ENCODE measurements at regions of chr9 and their contacts with region 1.

Region 1: DNA sequence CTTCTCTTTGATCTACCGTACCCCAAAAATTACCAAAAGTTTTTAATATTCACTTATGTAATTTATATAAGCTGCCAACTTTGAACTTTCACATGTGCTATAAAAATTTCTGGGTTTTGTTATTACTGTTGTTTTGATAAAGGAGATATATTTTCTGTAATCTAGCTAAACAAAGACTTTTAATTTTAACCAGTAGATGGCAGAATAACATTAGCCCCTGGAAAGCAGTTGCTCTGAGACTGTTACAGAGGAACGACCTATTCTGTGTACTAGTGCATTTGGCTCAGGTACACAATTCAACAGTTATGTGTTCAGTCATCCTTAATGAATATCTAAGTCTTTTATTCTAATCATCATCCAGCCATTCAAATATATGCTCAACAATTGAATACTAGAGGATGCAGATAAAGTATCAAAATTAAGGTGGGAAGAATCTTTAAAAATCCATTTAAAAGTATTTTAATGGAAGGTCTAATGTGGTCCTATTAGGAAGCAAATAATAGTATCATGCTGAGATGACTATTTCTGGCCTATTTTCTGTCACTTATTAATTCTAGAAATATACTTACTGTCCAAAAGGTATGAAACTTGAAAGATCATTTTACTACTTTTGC is 8.6 kb downstream of the KLHL9 start:
- DNase-seq: no peak
- ATAC-seq: peak; percentile 80

Region 2: GRCh38 chr9:21294325-21294724 is 32.3 kb before region 1 on chr9:
- intact Hi-C with region 1: no loop called
- DNase-seq: no peak
- ATAC-seq: no peak

Region 3: GRCh38 chr9:21395778-21396717 is 69.4 kb after region 1 on chr9:
- intact Hi-C with region 1: loop called (anchors 5 kb)
- DNase-seq: peak; percentile 72
- ATAC-seq: peak; percentile 89

Region 4: DNA sequence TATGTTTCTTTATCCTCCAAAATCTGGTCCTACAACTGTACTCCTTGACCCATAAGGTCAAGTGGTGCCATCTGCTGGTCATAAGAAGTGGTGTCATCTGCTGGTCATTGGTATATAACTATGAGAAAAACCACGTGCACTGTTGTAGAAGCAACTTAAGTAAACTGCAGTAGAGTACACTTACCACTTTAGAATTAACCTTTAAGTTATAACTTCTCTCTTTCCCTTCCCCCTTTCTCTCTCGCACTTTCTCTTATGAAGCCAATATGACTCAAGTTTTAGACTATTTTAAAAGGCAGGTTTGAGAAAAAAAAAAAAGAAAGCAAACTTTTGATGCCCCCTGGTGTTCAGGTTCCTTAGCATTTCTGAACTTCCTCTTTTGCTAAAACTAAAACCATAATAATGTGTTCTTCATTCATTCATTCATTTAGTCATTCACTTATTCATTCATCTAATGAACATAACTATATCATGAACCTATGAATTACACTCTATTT is 463.0 kb after region 1 on chr9:
- intact Hi-C with region 1: loop called (anchors 5 kb)
- DNase-seq: peak; percentile 46
- ATAC-seq: peak; percentile 97

Region 5: GRCh38 chr9:22008736-22009562 is 682.3 kb after region 1 on chr9 and contains the start of gene CDKN2B:
- intact Hi-C with region 1: no loop called
- DNase-seq: peak; percentile 97
- ATAC-seq: peak; percentile 100
- total RNA-seq, gene CDKN2B: 2.3 TPM